ENCODE measurements at regions of chr12 and their contacts with region 1.

Region 1: DNA sequence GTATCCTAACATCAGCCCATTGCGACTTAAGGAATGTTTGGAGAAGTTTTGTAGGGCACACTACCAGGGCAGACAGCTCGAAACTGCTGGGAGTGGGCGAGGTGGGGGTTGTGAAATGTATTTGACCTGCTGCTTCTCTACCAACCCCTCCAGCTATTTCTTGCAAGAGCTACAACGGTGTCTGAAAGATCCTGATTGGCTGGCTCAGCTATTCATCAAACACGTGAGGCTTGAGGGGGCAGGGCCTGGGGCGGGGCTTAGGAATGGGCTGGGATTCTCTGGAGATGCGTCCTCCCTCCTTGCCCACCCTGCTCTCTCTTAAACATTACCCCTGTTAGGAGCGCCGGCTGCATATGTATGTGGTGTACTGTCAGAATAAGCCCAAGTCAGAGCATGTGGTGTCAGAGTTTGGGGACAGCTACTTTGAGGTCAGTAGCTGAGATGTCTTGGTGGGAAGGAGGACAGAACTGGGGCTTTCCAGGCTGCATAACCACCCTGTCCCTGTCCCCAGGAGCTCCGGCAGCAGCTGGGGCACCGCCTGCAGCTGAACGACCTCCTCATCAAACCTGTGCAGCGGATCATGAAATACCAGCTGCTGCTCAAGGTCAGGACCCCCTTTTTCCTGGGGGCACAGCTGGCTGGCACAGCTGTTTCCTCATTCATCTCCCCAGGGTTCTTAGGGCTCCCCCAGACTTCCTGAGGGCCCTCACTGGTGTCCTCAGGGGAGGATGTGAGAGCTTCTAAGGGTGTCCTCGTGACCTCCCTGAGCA is 3.1 kb downstream of the ARHGEF25 start:
- DNase-seq: peak in 1 of 35 experiments; percentile 17
- ATAC-seq: no peak
- H3K4me3 ChIP-seq: no peak overlapping the region
- H3K4me3 Mint-ChIP-seq: no peak overlapping the region
- H3K27ac ChIP-seq: no peak overlapping the region
- H3K27ac Mint-ChIP-seq: no peak overlapping the region
- H3K4me1 ChIP-seq: peaks cover 2 to 23% of the 10 kb centered on the region in 2 experiments
- H3K4me1 Mint-ChIP-seq: peaks cover 15 to 18% (median 16%) of the 10 kb centered on the region in 3 donors
- H3K27me3 ChIP-seq: peaks cover 11 to 86% of the 10 kb centered on the region in 2 experiments
- H3K27me3 Mint-ChIP-seq: peaks cover 40 to 55% of the 10 kb centered on the region in 2 donors

Region 2: GRCh38 chr12:57590536-57591479 is 23.6 kb before region 1 on chr12 and contains the start of gene PIP4K2C:
- CTCF ChIA-PET with region 1: interaction called in 1 of 2 experiments, 14 read pairs
- POLR2A ChIA-PET with region 1: no interaction called
- DNase-seq: peak; percentile 30 to 87 (median 58)
- ATAC-seq: peak; percentile 88 to 96 (median 91)
- H3K4me3 ChIP-seq: peak within 1 kb of the TSS; percentile 76 to 97
- H3K4me3 Mint-ChIP-seq: peak within 1 kb of the TSS; percentile 85 to 87 (median 85)
- H3K27ac ChIP-seq: peak within 1 kb of the TSS; percentile 73
- H3K27ac Mint-ChIP-seq: peak within 1 kb of the TSS; percentile 86 to 87
- H3K4me1 ChIP-seq: peaks cover 7 to 25% of the 10 kb centered on the region in 2 experiments
- H3K4me1 Mint-ChIP-seq: peaks cover 25 to 30% (median 28%) of the 10 kb centered on the region in 3 donors
- H3K27me3 ChIP-seq: peaks cover 0 to 9% of the 10 kb centered on the region in 2 experiments
- H3K27me3 Mint-ChIP-seq: peaks cover 0 to 3% of the 10 kb centered on the region in 2 donors
- total RNA-seq, gene PIP4K2C: 21.7 to 30.9 (median 27.9) TPM

Measured in T-cell (primary cell).